ENCODE measurements at regions of chr12 and their contacts with region 1.

Region 1: DNA sequence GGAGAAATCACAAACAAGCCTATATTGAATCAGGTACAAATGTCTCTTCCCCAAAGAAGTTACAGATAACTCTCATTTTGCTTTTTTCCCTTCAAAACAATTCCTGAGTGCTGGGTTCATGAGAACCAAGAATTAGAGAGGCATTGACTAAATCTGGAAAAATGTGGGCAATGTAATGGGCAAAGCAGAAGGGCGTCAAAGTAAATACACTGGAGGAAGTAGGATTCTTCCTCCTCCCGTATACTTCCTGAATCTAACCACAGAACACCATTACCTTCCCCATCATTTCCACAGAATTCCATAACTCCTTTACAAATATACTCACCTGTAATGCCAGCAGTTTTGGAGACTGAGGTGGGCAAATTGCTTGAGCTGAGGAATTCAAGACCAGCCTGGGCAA is 3.0 kb upstream of the RBMS2 start:
- DNase-seq: no peak
- H3K4me3 ChIP-seq: no peak overlapping the region
- H3K27ac ChIP-seq: no peak overlapping the region
- H3K4me1 ChIP-seq: peaks cover 25% of the 10 kb centered on the region
- H3K27me3 ChIP-seq: no peaks in the 10 kb centered on the region
- CTCF ChIP-seq: no peak
- POLR2A ChIP-seq: no peak

Region 2: DNA sequence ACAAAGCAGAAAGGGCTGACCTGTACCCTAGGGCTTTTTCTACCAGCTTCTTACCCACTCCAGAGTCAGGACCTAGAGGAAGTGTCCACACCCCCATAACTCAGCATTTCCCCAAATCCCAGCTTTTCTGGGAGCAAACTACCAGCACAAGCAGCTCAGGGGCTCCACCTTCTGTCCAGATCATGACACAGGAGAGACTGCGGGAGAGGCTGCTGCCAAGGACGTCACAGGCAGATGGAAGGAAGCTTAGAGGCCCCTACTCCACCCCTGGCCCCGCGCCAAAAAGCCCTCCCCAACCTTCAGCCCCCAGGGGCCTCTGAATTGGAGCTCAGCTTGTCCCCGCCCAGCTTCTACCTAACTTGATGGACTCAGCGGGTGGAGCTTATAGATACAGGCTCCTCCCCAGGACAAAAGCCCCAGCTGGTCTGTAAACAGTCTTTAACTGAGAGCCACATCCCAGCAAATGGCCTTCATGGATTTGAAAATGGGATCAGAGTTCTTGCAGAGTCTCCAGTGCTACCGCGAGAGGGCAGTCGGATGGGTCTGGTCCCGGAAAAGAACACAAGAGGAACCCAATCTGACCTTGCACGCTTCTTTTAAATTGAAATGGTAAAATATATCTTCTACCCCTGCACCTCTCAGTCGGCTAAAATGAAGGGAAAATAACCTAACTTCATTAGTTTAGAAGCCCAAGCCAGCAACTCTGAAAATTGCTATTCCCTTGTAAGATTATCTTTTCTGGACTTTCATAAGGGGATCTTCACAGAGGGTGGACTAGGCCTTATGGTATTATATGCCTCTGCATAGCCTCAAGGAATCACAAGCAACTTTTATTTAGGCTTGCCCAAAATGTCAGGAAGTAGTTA is 118.3 kb after region 1 on chr12:
- intact Hi-C with region 1: loop called (anchors 10 kb)
- DNase-seq: peak; percentile 100
- H3K4me3 ChIP-seq: peak overlapping the region; percentile 74 to 94
- H3K27ac ChIP-seq: peak overlapping the region; percentile 100
- H3K4me1 ChIP-seq: peaks cover 43% of the 10 kb centered on the region
- H3K27me3 ChIP-seq: no peaks in the 10 kb centered on the region
- CTCF ChIP-seq: peak; percentile 22 to 48 (median 40)
- POLR2A ChIP-seq: no peak

Region 3: GRCh38 chr12:56833776-56834175 is 315.2 kb after region 1 on chr12:
- intact Hi-C with region 1: no loop called
- DNase-seq: no peak
- H3K4me3 ChIP-seq: no peak overlapping the region
- H3K27ac ChIP-seq: no peak overlapping the region
- H3K4me1 ChIP-seq: no peaks in the 10 kb centered on the region
- H3K27me3 ChIP-seq: no peaks in the 10 kb centered on the region
- CTCF ChIP-seq: no peak
- POLR2A ChIP-seq: no peak